ENCODE measurements at regions of chr19 and their contacts with region 1.

Region 1: GRCh38 chr19:4638828-4639530 is at the start of gene TNFAIP8L1:
- DNase-seq: peak; percentile 100
- H3K4me3 Mint-ChIP-seq: peak within 1 kb of the TSS; percentile 100
- H3K27ac Mint-ChIP-seq: peak within 1 kb of the TSS; percentile 94
- H3K4me1 Mint-ChIP-seq: peaks cover 34% of the 10 kb centered on the region
- H3K27me3 Mint-ChIP-seq: no peaks in the 10 kb centered on the region
- total RNA-seq, gene TNFAIP8L1: 12.5 and 13.5 TPM in 2 replicates

Region 2: DNA sequence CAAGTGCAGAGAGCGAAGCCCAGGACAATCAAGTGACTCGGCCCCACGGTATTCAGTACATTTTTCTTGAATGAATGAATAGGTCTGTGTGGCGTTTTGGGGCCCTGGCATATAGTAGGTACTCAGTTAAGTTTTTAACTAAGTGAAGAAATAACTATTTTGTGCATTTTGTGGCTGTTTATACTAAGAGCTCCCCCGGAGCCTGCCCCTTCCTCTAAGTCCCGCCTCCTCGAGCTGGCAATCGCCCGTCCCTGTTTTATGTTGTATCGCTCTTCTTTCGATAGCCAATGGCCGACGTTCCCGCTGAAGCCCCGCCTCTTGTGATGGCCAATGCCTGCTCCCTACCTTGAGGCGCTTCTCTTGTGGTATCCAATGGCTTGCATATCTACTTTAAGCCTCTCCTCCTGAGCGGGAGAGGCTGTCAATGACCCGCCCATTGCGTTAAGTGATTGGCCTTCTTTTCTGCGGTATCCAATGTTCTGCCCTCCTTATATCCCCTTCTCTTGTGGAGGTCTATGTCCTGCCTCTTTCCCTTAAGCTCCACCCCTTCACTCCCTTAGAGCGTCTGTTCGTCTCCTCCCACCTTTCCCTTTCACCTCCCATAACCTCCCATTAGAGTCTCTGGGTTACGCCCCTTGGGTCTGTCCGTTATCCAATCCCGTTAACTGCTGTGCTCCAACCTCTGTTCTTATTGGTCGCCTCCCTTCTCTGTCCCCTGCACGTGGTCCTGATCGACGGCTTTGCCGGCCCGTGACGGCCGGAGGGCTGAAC is 167.4 kb before region 1 on chr19:
- intact Hi-C with region 1: loop called (anchors 5 kb)
- DNase-seq: peak; percentile 99
- H3K4me3 Mint-ChIP-seq: no peak overlapping the region
- H3K27ac Mint-ChIP-seq: no peak overlapping the region
- H3K4me1 Mint-ChIP-seq: peaks cover 22% of the 10 kb centered on the region
- H3K27me3 Mint-ChIP-seq: no peaks in the 10 kb centered on the region

Region 3: DNA sequence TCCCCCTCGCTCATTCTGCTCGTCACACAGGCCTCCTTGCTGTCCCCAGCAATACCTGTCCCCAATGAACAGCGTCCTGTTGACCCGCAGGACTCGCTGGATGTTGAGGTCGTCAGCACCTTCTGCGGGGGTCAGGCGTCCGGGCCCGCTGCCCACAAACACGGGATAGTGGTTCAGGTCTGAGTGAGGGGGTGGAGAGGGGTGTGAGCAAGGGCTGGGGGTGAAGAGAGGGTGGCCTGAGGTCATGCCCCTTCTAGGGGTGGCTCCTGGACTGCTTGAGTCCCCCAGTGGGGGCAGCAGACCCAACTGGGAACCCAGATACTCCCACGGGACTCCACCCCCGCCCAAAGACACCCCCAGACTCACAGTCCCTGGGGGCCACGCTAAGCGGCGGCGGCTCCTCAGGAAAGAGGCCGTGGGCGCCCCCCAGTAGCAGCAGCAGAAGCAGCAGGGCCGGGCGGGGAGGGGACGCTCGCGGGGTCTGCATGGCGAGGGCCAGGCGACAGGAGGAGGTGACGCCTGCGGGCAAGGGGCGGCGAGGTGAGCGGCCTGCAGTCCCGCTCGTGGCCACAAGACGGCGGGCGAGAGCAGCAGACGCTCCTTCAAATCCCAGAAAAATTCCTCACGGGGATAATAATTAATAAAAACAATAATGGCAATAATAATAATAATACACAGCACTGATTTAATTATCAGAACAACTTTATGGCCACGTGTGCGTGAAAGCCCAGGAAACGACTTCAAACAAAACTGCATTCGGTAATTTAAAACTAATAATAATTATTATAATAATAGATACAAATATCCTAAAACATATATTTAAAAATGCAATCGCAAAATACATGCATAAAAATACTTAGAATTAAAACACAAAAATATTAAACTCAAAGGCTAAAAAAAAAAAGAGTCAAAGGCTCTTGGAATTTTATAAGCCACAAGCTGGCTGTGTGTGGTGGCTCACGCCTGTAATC is 80.7 kb before region 1 on chr19:
- intact Hi-C with region 1: loop called (anchors 5 kb)
- DNase-seq: peak; percentile 79
- H3K4me3 Mint-ChIP-seq: no peak overlapping the region
- H3K27ac Mint-ChIP-seq: no peak overlapping the region
- H3K4me1 Mint-ChIP-seq: no peaks in the 10 kb centered on the region
- H3K27me3 Mint-ChIP-seq: no peaks in the 10 kb centered on the region

Region 4: DNA sequence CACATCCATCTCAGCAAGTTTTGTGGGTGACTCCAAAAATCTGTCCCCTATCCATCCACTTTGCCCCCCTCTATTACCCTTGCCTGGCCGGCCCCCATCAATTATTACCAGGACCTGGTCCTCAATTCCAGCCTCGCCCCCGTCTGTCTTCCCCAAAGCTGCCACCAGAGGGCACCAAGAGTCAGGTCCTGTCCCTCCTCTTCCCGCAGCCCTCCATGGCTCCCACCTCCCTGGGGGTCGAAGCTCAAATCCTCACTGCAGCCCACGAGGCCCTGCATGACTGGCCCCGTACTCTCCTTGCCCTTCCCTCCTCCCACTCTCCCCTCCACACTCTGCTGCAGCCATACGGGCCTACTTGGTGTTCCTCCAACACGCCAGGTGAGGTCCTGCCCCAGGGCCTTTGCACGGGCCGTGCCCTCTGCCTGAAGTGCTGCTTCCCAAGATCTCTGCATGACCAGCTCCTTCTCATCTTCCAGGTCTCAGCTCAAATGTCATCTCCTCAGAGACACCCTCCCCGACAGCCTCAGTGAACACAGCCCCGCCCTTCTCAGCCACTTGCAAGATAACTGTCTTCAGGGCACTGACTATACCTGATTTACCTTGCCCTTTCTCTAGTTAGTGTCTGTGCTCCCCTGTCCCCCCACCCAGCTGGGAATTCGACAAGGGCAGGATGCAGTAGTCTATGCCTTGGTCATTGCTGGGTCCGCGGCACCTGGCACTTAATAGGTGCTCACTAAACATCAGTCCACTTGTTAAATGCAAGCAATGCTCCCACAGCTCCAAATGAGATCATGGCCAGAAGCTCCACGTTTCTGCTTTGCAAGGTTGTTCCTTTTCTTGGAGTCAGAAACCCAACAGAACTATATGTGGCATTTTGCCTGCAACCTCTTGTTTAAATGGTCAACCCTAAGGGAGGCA is 62.7 kb before region 1 on chr19:
- intact Hi-C with region 1: loop called (anchors 1 kb)
- DNase-seq: peak; percentile 90
- H3K4me3 Mint-ChIP-seq: no peak overlapping the region
- H3K27ac Mint-ChIP-seq: no peak overlapping the region
- H3K4me1 Mint-ChIP-seq: no peaks in the 10 kb centered on the region
- H3K27me3 Mint-ChIP-seq: peaks cover 43% of the 10 kb centered on the region

Region 5: GRCh38 chr19:4669723-4670480 is 30.9 kb after region 1 on chr19 and contains the start of gene MYDGF:
- intact Hi-C with region 1: loop called (anchors 1 kb)
- DNase-seq: peak; percentile 98
- H3K4me3 Mint-ChIP-seq: peak within 1 kb of the TSS; percentile 93
- H3K27ac Mint-ChIP-seq: peak within 1 kb of the TSS; percentile 81
- H3K4me1 Mint-ChIP-seq: peaks cover 11% of the 10 kb centered on the region
- H3K27me3 Mint-ChIP-seq: no peaks in the 10 kb centered on the region
- total RNA-seq, gene MYDGF: 85.2 and 90.8 TPM in 2 replicates

Region 6: DNA sequence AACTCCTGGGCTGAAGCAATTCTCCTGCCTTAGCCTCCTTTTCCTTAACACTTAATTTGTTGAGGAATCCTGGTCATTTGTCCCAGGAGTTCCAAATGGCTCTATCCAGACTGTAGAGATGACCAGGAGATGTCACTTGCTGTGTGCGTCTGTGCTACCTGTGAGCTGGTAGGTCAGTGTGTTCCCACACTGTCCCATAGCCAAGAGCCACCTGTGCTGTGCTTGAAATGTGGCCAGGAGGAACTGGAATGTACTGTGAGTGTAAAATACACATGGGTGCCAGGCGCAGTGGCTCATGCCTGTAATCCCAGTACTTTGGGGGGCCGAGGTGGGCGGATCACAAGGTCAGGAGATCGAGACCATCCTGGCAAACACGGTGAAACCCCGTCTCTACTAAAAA is 300.5 kb after region 1 on chr19:
- intact Hi-C with region 1: no loop called
- DNase-seq: no peak
- H3K4me3 Mint-ChIP-seq: no peak overlapping the region
- H3K27ac Mint-ChIP-seq: no peak overlapping the region
- H3K4me1 Mint-ChIP-seq: peaks cover 3% of the 10 kb centered on the region
- H3K27me3 Mint-ChIP-seq: no peaks in the 10 kb centered on the region

Measured in activated CD4-positive, alpha-beta T cell treated with anti-CD3 and anti-CD28 coated beads, Interleukin-2, amount 10 ng/mL, durations not matched to agents 24 days and 14 days (primary cell).